ENCODE measurements at regions of chr13 and their contacts with region 1.

Region 1: DNA sequence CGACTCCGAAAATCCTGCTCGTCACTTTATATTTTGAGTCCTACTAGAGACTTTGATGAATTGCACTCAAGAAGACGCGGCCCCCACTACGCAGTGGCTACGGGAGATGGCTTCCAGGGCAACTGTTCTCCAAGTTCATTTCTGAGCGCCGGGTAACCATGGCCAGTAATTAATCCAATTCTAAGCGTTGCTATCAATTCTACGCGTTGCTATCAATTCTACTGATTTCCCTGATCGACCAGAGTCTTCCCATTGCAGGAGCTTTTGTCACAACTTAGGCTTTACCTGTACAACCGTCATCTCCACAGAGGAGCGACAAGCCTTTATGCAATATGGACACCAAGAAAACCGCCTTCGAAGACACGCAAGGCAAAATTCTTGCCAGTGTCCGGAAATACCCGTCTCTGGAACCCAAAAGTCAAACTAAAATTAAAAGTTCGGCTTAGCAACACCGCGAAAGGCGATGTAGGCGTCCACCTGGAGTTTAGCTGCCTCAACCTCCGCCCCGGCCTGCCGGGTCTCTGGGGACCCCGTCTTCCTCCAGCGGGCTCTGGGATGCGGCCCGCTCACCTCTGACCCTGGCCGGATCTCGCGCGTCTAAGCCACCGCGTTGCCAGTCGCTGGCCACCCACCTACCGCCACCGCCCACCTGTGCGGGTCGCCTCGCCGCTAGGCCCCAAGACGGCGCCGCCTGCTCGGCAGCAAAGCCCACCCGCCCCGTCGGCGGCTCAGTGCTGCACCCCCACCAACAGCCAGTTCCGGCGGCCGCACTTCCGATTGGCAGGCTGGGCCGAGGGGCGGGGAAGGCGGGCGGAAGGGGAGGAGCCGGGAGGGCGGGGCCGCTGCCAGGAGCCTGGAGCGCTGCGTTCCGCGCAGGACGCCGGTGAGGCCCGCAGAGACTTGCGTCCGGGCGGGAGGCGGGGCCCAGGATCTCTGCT is at the start of gene SUPT20H:
- DNase-seq: peak; percentile 93
- H3K4me3 ChIP-seq: peak within 1 kb of the TSS; percentile 81 to 82 (median 81)
- H3K27ac ChIP-seq: peak within 1 kb of the TSS; percentile 92
- H3K4me1 ChIP-seq: peaks cover 6% of the 10 kb centered on the region
- H3K27me3 ChIP-seq: no peaks in the 10 kb centered on the region
- CTCF ChIP-seq: no peak
- POLR2A ChIP-seq: peak; percentile 73
- total RNA-seq, gene SUPT20H: 65.9 and 70.7 TPM in 2 replicates

Region 2: DNA sequence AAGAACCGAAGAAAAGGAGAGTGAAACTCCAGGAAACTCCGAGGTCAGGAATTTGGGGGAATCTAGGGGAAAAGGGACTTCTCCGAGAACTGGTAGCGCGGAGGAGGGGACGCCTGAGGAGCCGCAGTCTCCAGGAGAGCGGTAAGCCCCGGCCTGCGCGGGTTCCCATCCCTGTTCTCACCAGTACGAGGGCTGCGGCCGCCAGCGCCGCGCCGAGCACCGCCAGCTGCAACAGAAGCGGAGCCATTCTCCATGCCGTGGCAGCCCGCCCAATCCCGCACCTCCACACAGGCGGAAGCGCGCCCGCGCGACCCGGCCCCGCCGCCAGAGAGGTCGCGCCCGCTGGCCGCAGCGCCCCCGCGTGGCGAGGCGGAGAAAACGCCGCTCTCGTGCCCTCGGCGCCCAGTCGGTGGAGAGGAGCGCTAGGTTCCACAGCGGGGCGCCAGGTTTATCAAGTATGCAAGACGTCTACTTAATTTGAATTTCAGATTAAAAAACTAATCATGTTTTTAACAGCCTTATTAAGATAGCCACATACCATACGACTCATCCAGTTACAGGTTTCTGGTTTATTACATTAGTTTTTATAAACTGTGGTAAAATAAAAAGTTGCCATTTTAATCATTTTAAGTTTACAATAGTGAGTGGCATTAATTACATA is 60.0 kb before region 1 on chr13 and contains the start of gene ALG5:
- CTCF ChIA-PET with region 1: no interaction called
- POLR2A ChIA-PET with region 1: no interaction called
- dilution Hi-C with region 1: no loop called
- intact Hi-C with region 1: loop called (anchors 1 kb)
- DNase-seq: peak; percentile 94
- H3K4me3 ChIP-seq: peak within 1 kb of the TSS; percentile 89 to 97 (median 94)
- H3K27ac ChIP-seq: peak within 1 kb of the TSS; percentile 94
- H3K4me1 ChIP-seq: peaks cover 21% of the 10 kb centered on the region
- H3K27me3 ChIP-seq: no peaks in the 10 kb centered on the region
- CTCF ChIP-seq: peak; percentile 81 to 99
- POLR2A ChIP-seq: peak; percentile 94
- total RNA-seq, gene ALG5: 29.3 and 31.3 TPM in 2 replicates

Region 3: DNA sequence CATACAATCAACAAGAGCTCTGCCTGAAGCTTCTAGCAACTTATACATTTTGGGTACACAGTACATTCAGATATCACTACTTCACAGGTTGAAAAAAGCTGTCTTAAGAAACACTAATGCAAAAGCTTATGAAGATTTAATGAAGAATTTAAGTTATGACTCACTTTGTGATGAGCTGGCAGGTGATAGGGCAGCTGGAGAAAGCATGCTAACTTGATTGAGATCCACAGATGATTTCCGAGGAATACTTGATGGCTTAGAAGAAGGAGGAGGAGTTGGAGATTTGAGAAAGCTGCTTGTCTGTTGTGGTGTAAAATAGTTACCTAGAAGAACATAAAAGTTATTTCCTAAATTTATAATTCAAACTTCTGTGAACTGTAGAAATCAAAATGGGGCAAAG is 35.3 kb before region 1 on chr13:
- CTCF ChIA-PET with region 1: no interaction called
- POLR2A ChIA-PET with region 1: no interaction called
- dilution Hi-C with region 1: no loop called
- intact Hi-C with region 1: loop called (anchors 2 kb)
- DNase-seq: no peak
- H3K4me3 ChIP-seq: no peak overlapping the region
- H3K27ac ChIP-seq: no peak overlapping the region
- H3K4me1 ChIP-seq: peaks cover 15% of the 10 kb centered on the region
- H3K27me3 ChIP-seq: no peaks in the 10 kb centered on the region
- CTCF ChIP-seq: no peak
- POLR2A ChIP-seq: no peak

Region 4: GRCh38 chr13:37134411-37135041 is 75.3 kb after region 1 on chr13:
- CTCF ChIA-PET with region 1: no interaction called
- POLR2A ChIA-PET with region 1: no interaction called
- dilution Hi-C with region 1: no loop called
- intact Hi-C with region 1: loop called (anchors 2 kb)
- DNase-seq: peak; percentile 89
- H3K4me3 ChIP-seq: peak overlapping the region in 1 of 3 experiments; percentile 5
- H3K27ac ChIP-seq: peak overlapping the region; percentile 92
- H3K4me1 ChIP-seq: peaks cover 44% of the 10 kb centered on the region
- H3K27me3 ChIP-seq: no peaks in the 10 kb centered on the region
- CTCF ChIP-seq: no peak
- POLR2A ChIP-seq: no peak